Prostate gland (tissue), 2 donors: ENCODE measurements at regions of chr17 and their contacts with region 1.

Region 1: GRCh38 chr17:12744298-12744697 is 45.0 kb upstream of the ARHGAP44 start:
- DNase-seq: no peak
- H3K4me3 ChIP-seq: no peak overlapping the region
- H3K27ac ChIP-seq: no peak overlapping the region
- H3K4me1 ChIP-seq: no peaks in the 10 kb centered on the region
- H3K27me3 ChIP-seq: no peaks in the 10 kb centered on the region
- CTCF ChIP-seq: no peak
- POLR2A ChIP-seq: no peak

Region 2: GRCh38 chr17:12180644-12181261 is 563.5 kb before region 1 on chr17:
- intact Hi-C with region 1: loop called (anchors 5 kb)
- DNase-seq: peak; percentile 30
- H3K4me3 ChIP-seq: no peak overlapping the region
- H3K27ac ChIP-seq: no peak overlapping the region
- H3K4me1 ChIP-seq: no peaks in the 10 kb centered on the region
- H3K27me3 ChIP-seq: no peaks in the 10 kb centered on the region
- CTCF ChIP-seq: peak; percentile 31 to 72 (median 68)
- POLR2A ChIP-seq: no peak

Region 3: GRCh38 chr17:12545877-12546513 is 198.3 kb before region 1 on chr17:
- intact Hi-C with region 1: loop called (anchors 10 kb)
- DNase-seq: no peak
- H3K4me3 ChIP-seq: no peak overlapping the region
- H3K27ac ChIP-seq: no peak overlapping the region
- H3K4me1 ChIP-seq: no peaks in the 10 kb centered on the region
- H3K27me3 ChIP-seq: no peaks in the 10 kb centered on the region
- CTCF ChIP-seq: peak in 3 of 4 experiments; percentile 36 to 60 (median 50)
- POLR2A ChIP-seq: no peak